HEK293 (cell line): ENCODE measurements at regions of chr3 and their contacts with region 1.

Region 1: DNA sequence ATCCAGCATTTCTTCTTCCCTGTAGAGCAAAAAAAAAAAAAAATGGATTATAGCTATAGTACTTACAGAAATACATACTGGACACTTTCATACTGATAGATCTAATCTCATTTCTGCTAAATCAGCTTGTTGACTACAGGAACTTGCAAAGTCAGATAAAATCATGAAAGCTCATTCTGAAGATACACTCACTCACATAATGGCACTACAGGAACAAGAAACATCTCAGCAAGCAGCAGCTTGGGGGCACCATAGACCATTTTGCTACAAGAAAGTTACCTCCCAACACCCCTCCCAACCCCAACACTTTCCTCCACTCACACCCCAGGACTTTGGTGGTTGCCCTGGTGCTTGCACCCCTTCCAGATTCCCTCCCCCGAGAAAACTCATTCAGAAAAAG is 4.6 kb downstream of the MYH15 start:
- H3K4me3 ChIP-seq: no peak overlapping the region
- H3K27ac ChIP-seq: no peak overlapping the region
- H3K4me1 ChIP-seq: no peaks in the 10 kb centered on the region
- CTCF ChIP-seq: no peak

Region 2: DNA sequence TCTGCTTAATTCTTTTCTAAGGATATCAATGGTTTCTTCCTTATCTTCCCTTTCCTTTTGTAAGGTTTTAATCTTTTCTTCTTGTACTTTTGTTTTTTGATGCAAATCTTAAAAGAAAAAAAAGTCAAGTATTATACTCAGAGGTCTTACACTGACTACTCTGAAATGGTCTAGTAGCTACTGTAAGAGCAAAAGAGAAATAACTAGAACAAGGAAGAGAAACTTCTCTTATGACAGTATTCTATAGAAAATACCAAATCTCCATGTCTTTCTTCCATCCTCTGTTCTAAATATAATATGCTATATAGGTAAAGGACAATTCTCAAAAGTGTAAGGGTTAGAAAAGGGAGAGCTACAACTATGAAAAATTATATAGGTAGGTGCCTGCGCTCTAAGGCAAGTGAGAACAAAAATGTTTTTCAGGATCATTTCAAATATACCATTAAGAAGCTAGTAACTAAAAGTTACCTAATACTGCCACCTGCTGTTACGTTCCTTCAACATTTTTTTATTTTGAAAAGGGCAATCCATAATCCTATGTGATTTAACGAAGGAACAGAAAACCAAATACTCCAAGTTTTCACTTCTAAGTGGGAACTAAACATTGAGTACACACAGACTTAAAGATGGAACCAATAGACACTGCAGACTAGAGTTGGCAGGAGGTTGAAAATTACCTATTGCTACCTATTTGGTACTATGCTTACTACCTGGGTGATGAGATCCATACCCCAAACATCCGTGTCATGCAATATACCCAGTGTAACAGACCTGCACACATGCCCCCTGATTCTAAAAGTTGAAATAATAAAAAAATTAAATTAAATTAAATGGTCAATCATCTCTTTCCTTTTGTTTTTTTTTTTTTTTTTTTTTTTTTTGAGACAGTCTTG is 46.7 kb after region 1 on chr3:
- CTCF ChIA-PET with region 1: interaction called, 10 read pairs
- POLR2A ChIA-PET with region 1: no interaction called
- H3K4me3 ChIP-seq: no peak overlapping the region
- H3K27ac ChIP-seq: no peak overlapping the region
- H3K4me1 ChIP-seq: no peaks in the 10 kb centered on the region
- CTCF ChIP-seq: no peak

Region 3: DNA sequence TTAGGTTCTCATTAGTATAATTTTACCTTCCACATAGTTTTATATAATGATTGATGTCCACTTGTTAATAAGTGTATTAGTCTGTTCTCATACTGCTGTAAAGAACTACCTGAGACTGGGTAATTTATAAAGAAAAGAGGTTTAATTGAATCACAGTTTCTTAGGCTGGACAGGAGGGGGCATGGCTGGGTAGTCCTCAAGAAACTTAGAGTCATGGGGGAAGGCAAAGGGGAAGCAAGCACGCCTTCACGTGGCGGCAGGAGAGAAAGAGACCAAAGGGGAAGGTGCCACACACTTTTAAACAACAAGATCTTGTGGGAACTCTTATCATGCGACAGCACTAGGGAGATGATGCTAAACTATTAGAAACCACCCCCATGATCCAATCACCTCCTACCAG is 102.9 kb after region 1 on chr3:
- CTCF ChIA-PET with region 1: no interaction called
- POLR2A ChIA-PET with region 1: no interaction called
- H3K4me3 ChIP-seq: no peak overlapping the region
- H3K27ac ChIP-seq: no peak overlapping the region
- H3K4me1 ChIP-seq: no peaks in the 10 kb centered on the region
- CTCF ChIP-seq: no peak